Thyroid gland (tissue), 4 donors: ENCODE measurements at regions of chr9 and their contacts with region 1.

Region 1: GRCh38 chr9:96232539-96233241 is 69.3 kb downstream of the HSD17B3 start:
- DNase-seq: peak; percentile 47 to 62
- H3K4me3 ChIP-seq: no peak overlapping the region
- H3K27ac ChIP-seq: peak overlapping the region; percentile 15 to 47 (median 40)
- H3K4me1 ChIP-seq: peaks cover 3 to 26% of the 10 kb centered on the region in 2 donors
- H3K27me3 ChIP-seq: no peaks in the 10 kb centered on the region
- CTCF ChIP-seq: peak; percentile 72 to 96 (median 90)
- POLR2A ChIP-seq: no peak

Region 2: DNA sequence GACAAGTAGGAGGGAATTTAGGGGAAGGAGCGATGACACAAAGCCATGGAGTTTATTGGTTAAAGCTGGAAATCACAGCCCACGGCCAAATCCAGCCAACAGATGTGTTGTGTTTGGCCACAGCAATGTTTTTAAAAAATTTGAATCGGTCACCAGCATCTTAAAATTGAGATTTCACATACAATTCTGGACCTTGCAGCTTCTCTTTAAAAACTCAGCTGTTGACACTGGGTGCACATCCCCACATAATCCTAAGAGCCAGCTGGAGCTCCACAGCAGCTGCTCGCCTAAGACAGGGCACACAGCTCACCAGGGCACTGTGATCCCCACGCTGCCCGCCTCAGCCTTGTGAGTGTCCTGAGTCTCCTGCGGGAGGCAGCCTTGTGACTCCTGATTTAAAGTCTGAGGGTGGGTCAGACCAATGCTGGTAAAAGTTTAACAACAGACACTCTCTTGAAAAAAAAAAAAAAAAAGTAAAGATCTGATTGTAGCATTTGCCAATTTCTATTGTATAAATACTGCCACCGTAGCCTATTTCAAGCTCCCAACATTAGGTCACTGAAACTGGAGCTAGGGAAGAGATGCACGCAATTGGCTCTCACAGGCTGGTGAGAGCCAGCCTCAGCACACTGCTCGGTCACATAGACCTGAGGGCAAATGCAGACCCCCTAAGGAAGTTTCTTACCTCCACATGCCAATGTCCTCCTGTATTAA is 55.5 kb before region 1 on chr9:
- intact Hi-C with region 1: no loop called
- DNase-seq: no peak
- H3K4me3 ChIP-seq: no peak overlapping the region
- H3K27ac ChIP-seq: no peak overlapping the region
- H3K4me1 ChIP-seq: no peaks in the 10 kb centered on the region
- H3K27me3 ChIP-seq: no peaks in the 10 kb centered on the region
- CTCF ChIP-seq: no peak
- POLR2A ChIP-seq: no peak

Region 3: GRCh38 chr9:96317335-96317980 is 84.8 kb after region 1 on chr9:
- intact Hi-C with region 1: loop called (anchors 5 kb)
- DNase-seq: peak; percentile 59 to 75
- H3K4me3 ChIP-seq: no peak overlapping the region
- H3K27ac ChIP-seq: no peak overlapping the region
- H3K4me1 ChIP-seq: peaks cover 0 to 5% of the 10 kb centered on the region in 2 donors
- H3K27me3 ChIP-seq: no peaks in the 10 kb centered on the region
- CTCF ChIP-seq: peak; percentile 79 to 96 (median 84)
- POLR2A ChIP-seq: no peak